B cell (primary cell): ENCODE measurements at regions of chr20 and their contacts with region 1.

Region 1: GRCh38 chr20:3115190-3116107 is 30.9 kb upstream of the AVP start:
- DNase-seq: peak; percentile 73
- ATAC-seq: peak; percentile 69
- H3K4me3 ChIP-seq: no peak overlapping the region
- H3K4me3 Mint-ChIP-seq: no peak overlapping the region
- H3K27ac ChIP-seq: no peak overlapping the region
- H3K27ac Mint-ChIP-seq: no peak overlapping the region
- H3K4me1 ChIP-seq: peaks cover 0 to 4% of the 10 kb centered on the region in 2 donors
- H3K4me1 Mint-ChIP-seq: peaks cover 9% of the 10 kb centered on the region
- H3K27me3 ChIP-seq: no peaks in the 10 kb centered on the region
- H3K27me3 Mint-ChIP-seq: no peaks in the 10 kb centered on the region
- CTCF ChIP-seq: peak; percentile 85

Region 2: DNA sequence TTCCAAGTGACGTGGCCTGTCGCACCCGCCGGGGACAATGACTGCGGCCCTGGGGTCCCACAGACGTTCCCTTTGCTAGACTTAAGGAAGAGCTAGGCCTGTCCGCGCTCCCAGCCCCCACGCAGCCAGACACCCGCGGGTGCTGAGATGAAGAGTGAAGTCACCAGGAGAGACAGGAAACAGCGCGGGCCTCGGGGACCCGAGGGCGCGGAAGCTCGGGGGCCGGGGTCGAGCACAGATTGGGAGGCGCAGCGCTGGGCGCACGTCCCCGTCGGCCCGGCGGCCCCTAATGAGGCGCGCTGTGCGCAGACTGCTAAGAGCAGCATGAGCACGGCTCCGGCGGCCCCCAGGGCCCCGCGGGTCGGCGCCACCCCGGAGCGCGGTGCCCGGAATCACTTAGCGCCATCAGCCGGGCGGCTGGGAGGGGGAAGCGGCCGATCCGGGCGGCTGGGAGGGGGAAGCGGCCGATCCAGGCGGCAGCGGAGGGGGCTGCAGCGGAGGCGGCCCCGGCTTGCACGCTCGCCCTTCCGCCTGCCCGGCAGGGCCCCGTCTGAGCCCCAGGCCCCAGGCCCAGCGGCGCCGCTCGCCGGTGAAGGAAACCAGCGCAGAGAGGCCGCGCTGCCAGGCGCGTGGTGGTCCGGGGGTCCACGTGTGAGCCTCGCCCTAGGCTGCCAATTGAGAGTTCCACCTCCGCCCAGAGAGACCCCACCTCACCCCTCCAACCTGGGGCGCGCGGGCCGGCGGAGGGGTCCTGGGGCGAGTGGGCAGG is 22.7 kb before region 1 on chr20:
- CTCF ChIA-PET with region 1: interaction called, 8 read pairs
- POLR2A ChIA-PET with region 1: no interaction called
- intact Hi-C with region 1: loop called (anchors 2 kb)
- DNase-seq: peak; percentile 73
- ATAC-seq: peak; percentile 59
- H3K4me3 ChIP-seq: peak overlapping the region in 4 of 5 experiments; percentile 44 to 73 (median 58)
- H3K4me3 Mint-ChIP-seq: peak overlapping the region; percentile 93
- H3K27ac ChIP-seq: peak overlapping the region; percentile 58 to 68
- H3K27ac Mint-ChIP-seq: peak overlapping the region; percentile 97
- H3K4me1 ChIP-seq: peaks cover 18 to 27% of the 10 kb centered on the region in 2 donors
- H3K4me1 Mint-ChIP-seq: peaks cover 24% of the 10 kb centered on the region
- H3K27me3 ChIP-seq: peaks cover 0 to 12% (median 6%) of the 10 kb centered on the region in 4 experiments
- H3K27me3 Mint-ChIP-seq: peaks cover 21% of the 10 kb centered on the region
- CTCF ChIP-seq: no peak

Region 3: DNA sequence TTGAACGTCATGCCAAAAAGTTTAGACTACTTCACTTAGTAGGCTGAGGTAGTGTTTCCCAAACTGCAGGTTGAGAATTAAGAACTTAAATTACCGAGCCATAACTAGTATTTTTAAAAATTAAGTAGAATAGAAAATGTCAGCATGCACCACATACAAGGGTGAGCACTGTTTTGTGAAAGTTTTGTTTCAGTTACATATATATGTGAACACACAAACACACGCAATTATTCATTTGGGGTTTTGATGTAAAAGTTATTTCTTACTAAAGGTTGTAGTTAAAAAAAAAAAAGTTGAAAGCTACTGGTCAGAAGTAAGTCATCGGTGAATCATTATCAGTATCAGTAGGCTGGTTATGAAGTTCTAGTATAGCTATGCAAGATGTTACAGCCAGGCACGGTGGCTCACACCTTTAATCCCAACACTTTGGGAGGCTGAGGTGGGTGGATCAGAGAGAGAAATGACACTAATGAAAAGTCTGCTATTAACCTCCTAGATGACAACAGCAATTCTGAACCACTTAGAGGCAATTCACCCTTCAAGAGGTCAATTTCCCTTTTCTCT is 20.1 kb after region 1 on chr20:
- CTCF ChIA-PET with region 1: no interaction called
- POLR2A ChIA-PET with region 1: no interaction called
- intact Hi-C with region 1: no loop called
- DNase-seq: no peak
- ATAC-seq: no peak
- H3K4me3 ChIP-seq: no peak overlapping the region
- H3K4me3 Mint-ChIP-seq: no peak overlapping the region
- H3K27ac ChIP-seq: no peak overlapping the region
- H3K27ac Mint-ChIP-seq: no peak overlapping the region
- H3K4me1 ChIP-seq: no peaks in the 10 kb centered on the region
- H3K4me1 Mint-ChIP-seq: peaks cover 2% of the 10 kb centered on the region
- H3K27me3 ChIP-seq: no peaks in the 10 kb centered on the region
- H3K27me3 Mint-ChIP-seq: no peaks in the 10 kb centered on the region
- CTCF ChIP-seq: no peak

Region 4: DNA sequence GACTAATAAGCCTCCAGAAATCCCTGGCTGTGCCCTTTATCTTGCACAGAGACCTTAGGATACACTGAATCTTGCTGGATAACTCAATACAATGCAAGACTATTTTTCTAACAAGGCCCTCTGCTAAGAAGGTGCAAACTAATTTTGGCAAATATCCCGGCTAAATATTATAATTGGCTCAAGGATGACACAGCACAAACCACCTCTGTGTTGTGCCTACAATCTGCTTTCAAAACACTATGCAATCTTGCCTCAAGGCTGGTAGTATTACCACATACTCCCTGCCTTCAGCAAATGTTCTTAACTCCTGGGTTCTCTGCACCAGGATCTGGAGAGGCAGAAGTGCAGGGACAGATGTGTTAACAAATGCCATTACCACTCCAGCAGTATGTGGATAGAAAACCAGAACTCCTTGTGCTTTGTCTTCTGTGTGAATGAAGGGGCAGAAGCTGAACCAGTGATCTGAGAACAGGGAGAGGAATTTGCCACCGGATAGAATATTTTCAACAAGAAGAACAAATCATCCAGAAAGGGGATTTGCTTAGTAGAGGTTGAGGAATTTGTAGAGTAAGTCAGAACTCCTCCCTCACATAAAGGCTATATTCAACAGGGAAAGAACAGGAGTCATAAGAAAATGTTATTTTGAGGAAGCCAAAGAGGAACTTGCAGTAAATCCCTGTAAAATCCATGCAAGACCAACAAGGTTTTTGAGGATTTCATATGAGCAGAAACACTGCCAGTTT is 197.7 kb after region 1 on chr20:
- CTCF ChIA-PET with region 1: interaction called, 15 read pairs
- POLR2A ChIA-PET with region 1: no interaction called
- intact Hi-C with region 1: loop called (anchors 2 kb)
- DNase-seq: no peak
- ATAC-seq: no peak
- H3K4me3 ChIP-seq: no peak overlapping the region
- H3K4me3 Mint-ChIP-seq: no peak overlapping the region
- H3K27ac ChIP-seq: no peak overlapping the region
- H3K27ac Mint-ChIP-seq: no peak overlapping the region
- H3K4me1 ChIP-seq: no peaks in the 10 kb centered on the region
- H3K4me1 Mint-ChIP-seq: no peaks in the 10 kb centered on the region
- H3K27me3 ChIP-seq: no peaks in the 10 kb centered on the region
- H3K27me3 Mint-ChIP-seq: no peaks in the 10 kb centered on the region
- CTCF ChIP-seq: no peak